GM18951 (cell line): ENCODE measurements at regions of chr10 and their contacts with region 1.

Region 1: DNA sequence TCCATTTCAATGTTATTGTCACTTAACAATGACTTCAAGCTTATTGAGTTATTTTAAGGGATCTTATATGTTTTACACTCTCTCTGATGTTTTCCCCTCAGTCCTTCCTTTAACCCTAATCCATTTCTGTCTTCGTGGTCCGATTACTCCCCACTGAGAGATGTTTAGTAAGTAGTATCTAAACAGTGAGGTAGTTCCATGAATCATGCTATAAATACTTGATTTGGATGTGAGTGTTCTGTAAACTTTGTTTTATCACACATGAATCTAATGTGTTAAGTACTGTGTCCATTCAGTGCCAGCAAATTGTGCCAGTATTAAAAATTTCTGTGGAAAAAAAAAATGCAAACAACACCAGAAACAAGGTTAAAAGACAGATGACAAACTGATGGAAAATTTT is 18.6 kb downstream of the RPP30 start:
- POLR2A ChIP-seq: no peak

Region 2: GRCh38 chr10:90602862-90603610 is 287.3 kb before region 1 on chr10:
- in situ Hi-C with region 1: no loop called
- POLR2A ChIP-seq: no peak

Region 3: GRCh38 chr10:91271886-91272285 is 381.5 kb after region 1 on chr10:
- in situ Hi-C with region 1: loop called (anchors 10 kb)
- POLR2A ChIP-seq: no peak

Region 4: GRCh38 chr10:91381257-91381891 is 491.0 kb after region 1 on chr10:
- in situ Hi-C with region 1: no loop called
- POLR2A ChIP-seq: no peak